ENCODE measurements at regions of chr7 and their contacts with region 1.

Region 1: GRCh38 chr7:106009403-106010226 is 46.6 kb downstream of the CDHR3 start:
- DNase-seq: peak; percentile 77
- H3K4me3 ChIP-seq: peak overlapping the region in 1 of 2 donors; percentile 8
- H3K27ac ChIP-seq: no peak overlapping the region
- H3K4me1 ChIP-seq: peaks cover 4% of the 10 kb centered on the region
- H3K27me3 ChIP-seq: no peaks in the 10 kb centered on the region
- CTCF ChIP-seq: peak; percentile 75 to 90 (median 75)
- POLR2A ChIP-seq: no peak

Region 2: GRCh38 chr7:105759670-105760550 is 249.7 kb before region 1 on chr7:
- intact Hi-C with region 1: loop called (anchors 10 kb)
- DNase-seq: peak; percentile 72
- H3K4me3 ChIP-seq: no peak overlapping the region
- H3K27ac ChIP-seq: no peak overlapping the region
- H3K4me1 ChIP-seq: no peaks in the 10 kb centered on the region
- H3K27me3 ChIP-seq: no peaks in the 10 kb centered on the region
- CTCF ChIP-seq: peak; percentile 40 to 57 (median 52)
- POLR2A ChIP-seq: no peak

Measured in testis (tissue), 5 donors.